ENCODE measurements at regions of chr1 and their contacts with region 1.

Region 1: GRCh38 chr1:207885129-207886032 is 25.5 kb downstream of the CD34 start:
- DNase-seq: peak; percentile 94
- H3K4me3 Mint-ChIP-seq: no peak overlapping the region
- H3K27ac Mint-ChIP-seq: no peak overlapping the region
- H3K4me1 Mint-ChIP-seq: peaks cover 40% of the 10 kb centered on the region
- H3K27me3 Mint-ChIP-seq: peaks cover 16% of the 10 kb centered on the region
- CTCF ChIP-seq: peak; percentile 100

Region 2: GRCh38 chr1:207779008-207779407 is 106.4 kb before region 1 on chr1:
- CTCF ChIA-PET with region 1: no interaction called
- POLR2A ChIA-PET with region 1: no interaction called
- intact Hi-C with region 1: no loop called
- DNase-seq: no peak
- H3K4me3 Mint-ChIP-seq: no peak overlapping the region
- H3K27ac Mint-ChIP-seq: no peak overlapping the region
- H3K4me1 Mint-ChIP-seq: peaks cover 4% of the 10 kb centered on the region
- H3K27me3 Mint-ChIP-seq: no peaks in the 10 kb centered on the region
- CTCF ChIP-seq: no peak

Region 3: DNA sequence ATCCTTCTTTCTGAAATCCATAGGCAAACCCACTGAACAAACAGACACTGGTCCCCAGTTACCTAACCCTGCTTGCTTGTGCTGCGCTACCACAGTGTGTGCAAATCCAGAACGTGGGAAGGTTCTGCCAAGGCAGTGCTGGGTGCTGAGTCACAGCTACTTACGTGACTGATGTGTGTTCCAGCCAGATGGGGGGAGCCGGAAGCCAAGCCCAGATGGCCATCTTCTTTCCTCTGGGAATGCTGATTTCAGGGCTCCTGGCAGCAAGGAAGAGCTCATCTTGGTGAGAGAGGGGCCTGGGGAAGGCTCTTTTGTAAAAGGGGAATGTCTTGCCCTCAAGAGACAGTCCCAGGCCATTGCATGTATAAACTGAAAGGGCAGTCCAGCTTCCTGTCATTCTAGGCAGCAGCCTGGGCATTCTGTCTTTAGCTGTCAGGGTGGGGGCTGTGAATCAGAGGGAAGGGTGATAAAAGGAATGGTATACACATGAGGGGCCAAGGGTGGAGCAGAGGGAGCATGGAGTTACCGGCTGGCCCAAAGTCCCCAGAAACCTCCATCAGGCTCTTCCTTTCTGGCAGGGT is 79.5 kb before region 1 on chr1:
- CTCF ChIA-PET with region 1: interaction called, 13 read pairs
- POLR2A ChIA-PET with region 1: no interaction called
- intact Hi-C with region 1: no loop called
- DNase-seq: peak; percentile 100
- H3K4me3 Mint-ChIP-seq: peak overlapping the region; percentile 21
- H3K27ac Mint-ChIP-seq: peak overlapping the region; percentile 95
- H3K4me1 Mint-ChIP-seq: peaks cover 58% of the 10 kb centered on the region
- H3K27me3 Mint-ChIP-seq: no peaks in the 10 kb centered on the region
- CTCF ChIP-seq: no peak

Region 4: GRCh38 chr1:207853372-207853757 is 32.0 kb before region 1 on chr1:
- CTCF ChIA-PET with region 1: interaction called, 12 read pairs
- POLR2A ChIA-PET with region 1: no interaction called
- intact Hi-C with region 1: no loop called
- DNase-seq: no peak
- H3K4me3 Mint-ChIP-seq: no peak overlapping the region
- H3K27ac Mint-ChIP-seq: no peak overlapping the region
- H3K4me1 Mint-ChIP-seq: peaks cover 31% of the 10 kb centered on the region
- H3K27me3 Mint-ChIP-seq: no peaks in the 10 kb centered on the region
- CTCF ChIP-seq: no peak

Region 5: GRCh38 chr1:207910591-207911354 is 25.4 kb after region 1 on chr1 and contains the start of gene CD34:
- CTCF ChIA-PET with region 1: interaction called, 37 read pairs
- POLR2A ChIA-PET with region 1: no interaction called
- intact Hi-C with region 1: no loop called
- DNase-seq: no peak
- H3K4me3 Mint-ChIP-seq: no peak within 1 kb of the TSS
- H3K27ac Mint-ChIP-seq: no peak within 1 kb of the TSS
- H3K4me1 Mint-ChIP-seq: peaks cover 6% of the 10 kb centered on the region
- H3K27me3 Mint-ChIP-seq: peaks cover 25% of the 10 kb centered on the region
- CTCF ChIP-seq: no peak
- total RNA-seq, gene CD34: 0.52 TPM in 1 of 2 replicates, not detected in the other

Region 6: GRCh38 chr1:207941665-207942064 is 56.3 kb after region 1 on chr1:
- CTCF ChIA-PET with region 1: interaction called, 62 read pairs
- POLR2A ChIA-PET with region 1: interaction called, 4 read pairs
- intact Hi-C with region 1: no loop called
- DNase-seq: peak; percentile 48
- H3K4me3 Mint-ChIP-seq: no peak overlapping the region
- H3K27ac Mint-ChIP-seq: no peak overlapping the region
- H3K4me1 Mint-ChIP-seq: peaks cover 6% of the 10 kb centered on the region
- H3K27me3 Mint-ChIP-seq: no peaks in the 10 kb centered on the region
- CTCF ChIP-seq: no peak

Region 7: DNA sequence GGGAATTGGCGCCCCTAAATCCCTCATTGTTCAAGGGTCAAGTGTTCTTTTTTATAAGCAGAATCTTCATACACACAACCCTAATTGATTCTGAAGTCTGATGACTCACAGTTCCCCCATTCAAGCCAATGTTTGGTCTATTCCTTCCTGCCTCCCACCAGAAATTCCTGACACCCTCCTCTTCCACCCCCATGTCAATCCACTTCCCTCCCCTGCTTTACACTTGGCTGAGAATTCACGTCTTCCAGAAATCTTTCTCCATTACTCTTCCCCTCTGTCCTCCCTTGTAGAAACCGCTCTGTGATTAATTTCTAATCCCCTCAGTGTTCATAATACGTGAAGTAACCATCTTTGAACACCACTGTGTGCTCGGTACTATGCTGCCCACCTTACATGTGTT is 101.8 kb after region 1 on chr1:
- CTCF ChIA-PET with region 1: interaction called, 74 read pairs
- POLR2A ChIA-PET with region 1: no interaction called
- intact Hi-C with region 1: no loop called
- DNase-seq: no peak
- H3K4me3 Mint-ChIP-seq: no peak overlapping the region
- H3K27ac Mint-ChIP-seq: no peak overlapping the region
- H3K4me1 Mint-ChIP-seq: no peaks in the 10 kb centered on the region
- H3K27me3 Mint-ChIP-seq: peaks cover 48% of the 10 kb centered on the region
- CTCF ChIP-seq: no peak

Region 8: GRCh38 chr1:208093754-208094719 is 208.7 kb after region 1 on chr1:
- CTCF ChIA-PET with region 1: interaction called, 10 read pairs
- POLR2A ChIA-PET with region 1: no interaction called
- intact Hi-C with region 1: loop called (anchors 1 kb)
- DNase-seq: peak; percentile 83
- H3K4me3 Mint-ChIP-seq: no peak overlapping the region
- H3K27ac Mint-ChIP-seq: peak overlapping the region; percentile 31
- H3K4me1 Mint-ChIP-seq: peaks cover 2% of the 10 kb centered on the region
- H3K27me3 Mint-ChIP-seq: no peaks in the 10 kb centered on the region
- CTCF ChIP-seq: peak; percentile 96

Measured in MCF 10A (cell line).